Heart right ventricle (tissue), 16 donors: ENCODE measurements at regions of chr1 and their contacts with region 1.

Region 1: GRCh38 chr1:192609110-192610079 is 26.6 kb upstream of the RGS13 start:
- DNase-seq: peak; percentile 9 to 17
- ATAC-seq: peak in 7 of 8 donors; percentile 26 to 89 (median 52)
- H3K4me3 ChIP-seq: no peak overlapping the region
- H3K27ac ChIP-seq: no peak overlapping the region
- H3K4me1 ChIP-seq: peaks cover 0 to 22% (median 0%) of the 10 kb centered on the region in 9 donors
- H3K27me3 ChIP-seq: no peaks in the 10 kb centered on the region
- CTCF ChIP-seq: no peak

Region 2: GRCh38 chr1:191963286-191963685 is 646.1 kb before region 1 on chr1:
- intact Hi-C with region 1: no loop called
- DNase-seq: no peak
- ATAC-seq: no peak
- H3K4me3 ChIP-seq: no peak overlapping the region
- H3K27ac ChIP-seq: peak overlapping the region in 3 of 10 donors; percentile 1 to 40 (median 1)
- H3K4me1 ChIP-seq: peaks cover 0 to 11% (median 5%) of the 10 kb centered on the region in 9 donors
- H3K27me3 ChIP-seq: no peaks in the 10 kb centered on the region
- CTCF ChIP-seq: no peak

Region 3: DNA sequence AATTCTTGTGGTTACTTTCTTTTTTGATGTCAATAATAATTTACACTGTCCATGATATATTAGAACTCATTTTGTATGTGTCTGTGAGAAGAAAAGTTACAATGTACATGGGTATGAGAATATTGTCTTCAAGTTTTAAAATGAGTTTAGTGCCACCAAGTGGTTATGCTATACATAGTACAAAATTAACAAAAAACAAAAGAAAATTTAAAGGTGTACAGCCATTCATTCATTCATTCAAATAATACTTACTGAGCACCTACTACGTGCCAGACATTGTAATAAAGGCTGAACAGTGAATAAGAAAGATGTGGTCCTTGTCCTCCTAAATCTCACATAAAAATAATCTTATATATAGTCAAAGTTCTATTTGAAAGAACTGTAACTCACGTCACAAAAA is 422.0 kb after region 1 on chr1:
- intact Hi-C with region 1: loop called in 3 of 10 experiments (anchors 10 kb)
- DNase-seq: no peak
- ATAC-seq: no peak
- H3K4me3 ChIP-seq: no peak overlapping the region
- H3K27ac ChIP-seq: no peak overlapping the region
- H3K4me1 ChIP-seq: peaks cover 0 to 5% (median 0%) of the 10 kb centered on the region in 9 donors
- H3K27me3 ChIP-seq: no peaks in the 10 kb centered on the region
- CTCF ChIP-seq: peak in 5 of 9 donors; percentile 23 to 44 (median 39)